ENCODE measurements at regions of chr3 and their contacts with region 1.

Region 1: GRCh38 chr3:69288161-69288895 is 97.6 kb downstream of the FRMD4B start:
- DNase-seq: peak; percentile 20
- H3K4me3 Mint-ChIP-seq: peak overlapping the region; percentile 8
- H3K27ac Mint-ChIP-seq: peak overlapping the region; percentile 71
- H3K4me1 Mint-ChIP-seq: peaks cover 14% of the 10 kb centered on the region
- H3K27me3 Mint-ChIP-seq: no peaks in the 10 kb centered on the region
- CTCF ChIP-seq: no peak

Region 2: GRCh38 chr3:69020424-69020823 is 267.9 kb before region 1 on chr3:
- CTCF ChIA-PET with region 1: interaction called, 12 read pairs
- intact Hi-C with region 1: no loop called
- DNase-seq: no peak
- H3K4me3 Mint-ChIP-seq: no peak overlapping the region
- H3K27ac Mint-ChIP-seq: no peak overlapping the region
- H3K4me1 Mint-ChIP-seq: peaks cover 13% of the 10 kb centered on the region
- H3K27me3 Mint-ChIP-seq: no peaks in the 10 kb centered on the region
- CTCF ChIP-seq: no peak

Region 3: GRCh38 chr3:69212411-69213139 is 75.8 kb before region 1 on chr3:
- CTCF ChIA-PET with region 1: no interaction called
- intact Hi-C with region 1: no loop called
- DNase-seq: peak; percentile 43
- H3K4me3 Mint-ChIP-seq: no peak overlapping the region
- H3K27ac Mint-ChIP-seq: peak overlapping the region; percentile 99
- H3K4me1 Mint-ChIP-seq: peaks cover 32% of the 10 kb centered on the region
- H3K27me3 Mint-ChIP-seq: no peaks in the 10 kb centered on the region
- CTCF ChIP-seq: no peak

Measured in Calu3 (cell line).